MCF 10A (cell line): ENCODE measurements at regions of chr2 and their contacts with region 1.

Region 1: GRCh38 chr2:111120253-111121027 is at the start of gene BCL2L11:
- DNase-seq: peak; percentile 90
- H3K4me3 Mint-ChIP-seq: peak within 1 kb of the TSS; percentile 91
- H3K27ac Mint-ChIP-seq: peak within 1 kb of the TSS; percentile 93
- H3K4me1 Mint-ChIP-seq: peaks cover 8% of the 10 kb centered on the region
- H3K27me3 Mint-ChIP-seq: no peaks in the 10 kb centered on the region
- CTCF ChIP-seq: peak; percentile 9
- total RNA-seq, gene BCL2L11: 5.8 and 8.4 TPM in 2 replicates

Region 2: GRCh38 chr2:111007757-111008688 is 112.4 kb before region 1 on chr2:
- CTCF ChIA-PET with region 1: no interaction called
- POLR2A ChIA-PET with region 1: no interaction called
- intact Hi-C with region 1: no loop called
- DNase-seq: no peak
- H3K4me3 Mint-ChIP-seq: no peak overlapping the region
- H3K27ac Mint-ChIP-seq: no peak overlapping the region
- H3K4me1 Mint-ChIP-seq: no peaks in the 10 kb centered on the region
- H3K27me3 Mint-ChIP-seq: peaks cover 39% of the 10 kb centered on the region
- CTCF ChIP-seq: no peak

Region 3: GRCh38 chr2:111133603-111134002 is 13.2 kb after region 1 on chr2:
- CTCF ChIA-PET with region 1: interaction called, 6 read pairs
- POLR2A ChIA-PET with region 1: interaction called, 25 read pairs
- intact Hi-C with region 1: no loop called
- DNase-seq: no peak
- H3K4me3 Mint-ChIP-seq: no peak overlapping the region
- H3K27ac Mint-ChIP-seq: no peak overlapping the region
- H3K4me1 Mint-ChIP-seq: peaks cover 25% of the 10 kb centered on the region
- H3K27me3 Mint-ChIP-seq: no peaks in the 10 kb centered on the region
- CTCF ChIP-seq: no peak

Region 4: DNA sequence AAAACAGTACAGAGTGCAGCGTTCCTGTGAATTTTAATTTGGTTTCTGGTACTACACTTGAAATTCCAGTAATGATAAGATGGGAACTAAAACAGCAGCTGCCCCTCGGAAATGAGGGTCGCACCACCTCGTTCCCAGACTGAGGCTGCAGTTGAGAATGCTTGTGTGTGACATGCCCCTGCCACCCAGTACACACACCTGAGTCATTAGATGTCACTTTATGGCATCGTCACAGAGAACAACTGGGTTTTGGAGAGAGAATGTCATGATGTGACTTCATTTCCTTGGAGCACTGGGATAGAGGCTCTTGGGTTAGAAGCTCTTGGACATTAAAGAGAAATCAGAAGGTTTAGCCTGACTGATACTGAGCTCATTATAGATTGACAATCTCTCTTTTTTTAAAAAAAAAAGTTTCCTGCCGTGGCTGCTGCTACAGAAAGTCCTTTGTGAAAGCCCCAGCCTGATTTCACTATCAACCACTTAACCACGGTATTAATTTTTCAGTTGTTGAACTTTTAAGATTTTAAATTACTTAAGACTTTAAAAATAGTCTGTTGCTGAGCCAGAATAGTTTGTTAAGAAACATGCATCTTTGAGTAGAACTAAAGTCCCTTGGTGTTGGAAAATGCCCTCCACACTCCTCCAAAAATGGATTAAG is 24.8 kb after region 1 on chr2:
- CTCF ChIA-PET with region 1: interaction called, 4 read pairs
- POLR2A ChIA-PET with region 1: interaction called, 25 read pairs
- intact Hi-C with region 1: no loop called
- DNase-seq: no peak
- H3K4me3 Mint-ChIP-seq: no peak overlapping the region
- H3K27ac Mint-ChIP-seq: no peak overlapping the region
- H3K4me1 Mint-ChIP-seq: peaks cover 7% of the 10 kb centered on the region
- H3K27me3 Mint-ChIP-seq: no peaks in the 10 kb centered on the region
- CTCF ChIP-seq: no peak

Region 5: GRCh38 chr2:111176860-111177259 is 56.4 kb after region 1 on chr2:
- CTCF ChIA-PET with region 1: no interaction called
- POLR2A ChIA-PET with region 1: interaction called, 14 read pairs
- intact Hi-C with region 1: no loop called
- DNase-seq: peak; percentile 31
- H3K4me3 Mint-ChIP-seq: peak overlapping the region; percentile 8
- H3K27ac Mint-ChIP-seq: peak overlapping the region; percentile 24
- H3K4me1 Mint-ChIP-seq: peaks cover 32% of the 10 kb centered on the region
- H3K27me3 Mint-ChIP-seq: no peaks in the 10 kb centered on the region
- CTCF ChIP-seq: no peak

Region 6: DNA sequence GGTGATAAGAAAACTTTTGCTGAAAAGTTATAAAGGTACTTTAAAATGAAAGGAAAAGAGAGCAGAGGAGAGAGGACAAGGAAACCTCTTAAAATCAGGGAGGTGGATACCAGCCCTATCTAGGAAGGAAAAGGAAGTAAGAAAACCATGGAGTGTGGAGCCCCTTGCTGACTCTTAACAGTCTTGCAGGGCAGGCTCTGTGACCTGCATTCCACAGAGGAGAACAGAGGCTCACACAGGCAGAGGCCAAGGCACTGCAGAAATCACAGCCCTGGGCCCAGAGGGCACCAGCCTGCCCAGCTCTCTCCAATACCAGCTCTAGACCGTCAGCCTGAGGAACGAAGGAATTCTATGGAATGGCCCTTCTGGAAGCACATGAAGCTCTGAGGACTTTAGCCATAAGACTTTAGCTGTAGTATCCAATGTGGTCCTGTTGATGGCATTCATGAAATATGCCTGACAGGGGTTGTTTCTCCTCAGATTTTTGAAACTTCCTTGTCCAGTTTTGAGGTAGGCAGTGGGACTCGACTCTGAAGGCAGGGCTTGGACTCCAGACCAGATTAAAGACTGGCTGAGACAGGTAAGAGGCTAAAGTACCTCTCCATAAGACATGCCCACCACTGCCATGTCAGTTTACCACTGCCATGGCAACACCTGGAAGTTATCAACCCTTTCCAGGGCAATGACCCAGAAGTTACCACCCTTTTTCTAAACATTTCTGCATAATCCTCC is 547.3 kb after region 1 on chr2:
- CTCF ChIA-PET with region 1: no interaction called
- POLR2A ChIA-PET with region 1: no interaction called
- intact Hi-C with region 1: loop called (anchors 1 kb)
- DNase-seq: peak; percentile 69
- H3K4me3 Mint-ChIP-seq: no peak overlapping the region
- H3K27ac Mint-ChIP-seq: no peak overlapping the region
- H3K4me1 Mint-ChIP-seq: peaks cover 11% of the 10 kb centered on the region
- H3K27me3 Mint-ChIP-seq: no peaks in the 10 kb centered on the region
- CTCF ChIP-seq: peak; percentile 63

Region 7: GRCh38 chr2:111704246-111704645 is 583.8 kb after region 1 on chr2:
- CTCF ChIA-PET with region 1: interaction called, 3 read pairs
- POLR2A ChIA-PET with region 1: interaction called, 6 read pairs
- intact Hi-C with region 1: loop called (anchors 1 kb)
- DNase-seq: peak; percentile 78
- H3K4me3 Mint-ChIP-seq: peak overlapping the region; percentile 23
- H3K27ac Mint-ChIP-seq: peak overlapping the region; percentile 31
- H3K4me1 Mint-ChIP-seq: peaks cover 54% of the 10 kb centered on the region
- H3K27me3 Mint-ChIP-seq: no peaks in the 10 kb centered on the region
- CTCF ChIP-seq: no peak